Activated CD8-positive, alpha-beta T cell treated with anti-CD3 and anti-CD28 coated beads for 36 hours (primary cell): ENCODE measurements at regions of chr19 and their contacts with region 1.

Region 1: GRCh38 chr19:12139885-12140547 is at the start of gene ZNF20:
- DNase-seq: peak; percentile 97
- ATAC-seq: peak; percentile 94
- H3K4me3 Mint-ChIP-seq: peak within 1 kb of the TSS; percentile 91
- H3K27ac Mint-ChIP-seq: peak within 1 kb of the TSS; percentile 80
- H3K4me1 Mint-ChIP-seq: peaks cover 33% of the 10 kb centered on the region
- H3K27me3 Mint-ChIP-seq: no peaks in the 10 kb centered on the region
- CTCF ChIP-seq: no peak
- total RNA-seq, gene ZNF20: 2.0 to 3.0 TPM

Region 2: DNA sequence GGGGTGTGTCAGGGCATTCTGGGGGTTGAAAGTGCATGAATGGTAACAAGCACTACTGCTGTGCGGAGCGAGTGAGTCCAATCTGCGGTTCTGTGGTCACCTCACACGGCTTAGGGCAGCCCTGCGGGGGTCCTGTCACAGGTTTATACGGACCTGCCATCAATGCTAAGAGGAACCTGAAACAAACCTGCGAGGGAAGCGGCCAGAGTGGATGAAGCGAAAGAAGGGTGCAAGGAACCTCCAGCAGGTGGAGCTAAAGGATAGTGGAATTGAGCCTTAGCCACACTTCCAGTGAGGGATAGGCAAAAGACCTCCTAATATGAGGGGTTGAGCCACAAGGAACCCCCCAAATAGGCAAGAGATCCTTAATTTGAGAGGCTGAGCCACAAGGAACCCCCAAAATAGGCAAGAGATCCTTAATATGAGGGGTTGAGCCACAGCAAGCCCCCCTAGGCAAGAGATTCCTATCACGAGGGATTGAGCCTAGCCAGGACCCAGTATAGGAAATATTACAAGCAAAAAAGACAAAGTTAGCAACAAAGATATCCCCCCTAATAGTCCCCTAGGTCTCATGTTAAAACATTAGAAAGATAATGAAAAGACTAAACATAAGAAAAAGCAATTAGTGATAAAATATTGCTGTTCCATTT is 258.7 kb before region 1 on chr19:
- CTCF ChIA-PET with region 1: interaction called, 10 read pairs
- POLR2A ChIA-PET with region 1: interaction called, 3 read pairs
- intact Hi-C with region 1: loop called (anchors 2 kb)
- DNase-seq: peak; percentile 76
- ATAC-seq: peak; percentile 81
- H3K4me3 Mint-ChIP-seq: no peak overlapping the region
- H3K27ac Mint-ChIP-seq: no peak overlapping the region
- H3K4me1 Mint-ChIP-seq: peaks cover 2% of the 10 kb centered on the region
- H3K27me3 Mint-ChIP-seq: peaks cover 1% of the 10 kb centered on the region
- CTCF ChIP-seq: peak; percentile 68

Region 3: DNA sequence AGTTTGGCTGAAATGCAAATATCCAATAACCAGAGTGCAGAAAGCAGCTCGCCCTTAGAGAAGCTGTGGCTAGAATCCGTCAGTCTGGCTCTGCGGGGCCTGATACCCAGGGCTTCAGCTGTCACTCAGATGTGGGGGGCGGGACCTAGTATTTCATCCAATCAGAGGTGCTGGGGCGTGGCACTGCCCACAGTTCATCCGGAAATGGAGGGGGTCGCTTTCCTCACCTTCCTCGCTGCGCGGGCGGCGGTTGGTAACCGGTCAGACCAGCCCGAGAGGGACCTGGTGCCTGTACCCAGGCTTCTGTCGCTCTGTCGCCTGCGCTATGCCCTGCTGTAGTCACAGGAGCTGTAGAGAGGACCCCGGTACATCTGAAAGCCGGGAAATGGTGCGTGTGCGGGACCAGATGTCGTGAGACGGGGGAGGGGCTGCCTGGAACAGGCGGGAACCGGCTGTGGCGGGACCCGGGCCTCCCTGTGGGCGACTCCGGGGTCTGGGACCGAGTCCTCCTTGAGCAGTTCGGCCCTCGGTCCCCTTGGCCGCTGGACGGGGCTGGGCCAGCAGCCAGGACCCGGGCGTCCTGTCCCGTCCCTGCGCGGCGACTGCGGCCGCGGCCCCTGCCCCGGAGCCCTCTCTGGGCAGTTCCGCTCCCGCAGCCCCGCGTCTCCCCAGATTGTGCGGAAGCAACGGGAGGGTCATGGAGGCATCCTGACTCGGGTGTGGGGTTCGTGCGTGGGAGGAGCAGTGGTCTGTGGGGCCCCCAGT is 214.9 kb before region 1 on chr19 and contains the start of gene ZNF700:
- CTCF ChIA-PET with region 1: interaction called, 45 read pairs
- POLR2A ChIA-PET with region 1: interaction called, 4 read pairs
- intact Hi-C with region 1: no loop called
- DNase-seq: peak; percentile 99
- ATAC-seq: peak; percentile 94
- H3K4me3 Mint-ChIP-seq: peak within 1 kb of the TSS; percentile 93
- H3K27ac Mint-ChIP-seq: peak within 1 kb of the TSS; percentile 99
- H3K4me1 Mint-ChIP-seq: peaks cover 39% of the 10 kb centered on the region
- H3K27me3 Mint-ChIP-seq: no peaks in the 10 kb centered on the region
- CTCF ChIP-seq: no peak
- total RNA-seq, gene ZNF700: 12.0 to 14.0 TPM

Region 4: GRCh38 chr19:12052497-12053169 is 87.4 kb before region 1 on chr19 and contains the start of gene ZNF878:
- CTCF ChIA-PET with region 1: interaction called, 22 read pairs
- POLR2A ChIA-PET with region 1: no interaction called
- intact Hi-C with region 1: no loop called
- DNase-seq: peak; percentile 81
- ATAC-seq: peak; percentile 89
- H3K4me3 Mint-ChIP-seq: peak within 1 kb of the TSS; percentile 83
- H3K27ac Mint-ChIP-seq: peak within 1 kb of the TSS; percentile 80
- H3K4me1 Mint-ChIP-seq: peaks cover 13% of the 10 kb centered on the region
- H3K27me3 Mint-ChIP-seq: peaks cover 20% of the 10 kb centered on the region
- CTCF ChIP-seq: no peak
- total RNA-seq, gene ZNF878: 0.65 to 1.0 TPM

Region 5: GRCh38 chr19:12085074-12085805 is 54.8 kb before region 1 on chr19:
- CTCF ChIA-PET with region 1: interaction called, 136 read pairs
- POLR2A ChIA-PET with region 1: no interaction called
- intact Hi-C with region 1: loop called (anchors 2 kb)
- DNase-seq: peak; percentile 16
- ATAC-seq: peak; percentile 47
- H3K4me3 Mint-ChIP-seq: no peak overlapping the region
- H3K27ac Mint-ChIP-seq: no peak overlapping the region
- H3K4me1 Mint-ChIP-seq: no peaks in the 10 kb centered on the region
- H3K27me3 Mint-ChIP-seq: no peaks in the 10 kb centered on the region
- CTCF ChIP-seq: no peak

Region 6: GRCh38 chr19:12126707-12127106 is 13.3 kb before region 1 on chr19:
- CTCF ChIA-PET with region 1: interaction called, 18 read pairs
- POLR2A ChIA-PET with region 1: no interaction called
- intact Hi-C with region 1: no loop called
- DNase-seq: peak; percentile 31
- ATAC-seq: no peak
- H3K4me3 Mint-ChIP-seq: no peak overlapping the region
- H3K27ac Mint-ChIP-seq: no peak overlapping the region
- H3K4me1 Mint-ChIP-seq: peaks cover 4% of the 10 kb centered on the region
- H3K27me3 Mint-ChIP-seq: no peaks in the 10 kb centered on the region
- CTCF ChIP-seq: peak; percentile 49

Region 7: GRCh38 chr19:12162882-12163806 is 23.1 kb after region 1 on chr19 and contains the start of gene ZNF136:
- CTCF ChIA-PET with region 1: interaction called, 17 read pairs
- POLR2A ChIA-PET with region 1: no interaction called
- intact Hi-C with region 1: no loop called
- DNase-seq: peak; percentile 97
- ATAC-seq: peak; percentile 99
- H3K4me3 Mint-ChIP-seq: peak within 1 kb of the TSS; percentile 95
- H3K27ac Mint-ChIP-seq: peak within 1 kb of the TSS; percentile 98
- H3K4me1 Mint-ChIP-seq: peaks cover 41% of the 10 kb centered on the region
- H3K27me3 Mint-ChIP-seq: no peaks in the 10 kb centered on the region
- CTCF ChIP-seq: no peak
- total RNA-seq, gene ZNF136: 10.2 to 10.3 TPM